Colonic mucosa (tissue), 4 donors: ENCODE measurements at regions of chr9 and their contacts with region 1.

Region 1: DNA sequence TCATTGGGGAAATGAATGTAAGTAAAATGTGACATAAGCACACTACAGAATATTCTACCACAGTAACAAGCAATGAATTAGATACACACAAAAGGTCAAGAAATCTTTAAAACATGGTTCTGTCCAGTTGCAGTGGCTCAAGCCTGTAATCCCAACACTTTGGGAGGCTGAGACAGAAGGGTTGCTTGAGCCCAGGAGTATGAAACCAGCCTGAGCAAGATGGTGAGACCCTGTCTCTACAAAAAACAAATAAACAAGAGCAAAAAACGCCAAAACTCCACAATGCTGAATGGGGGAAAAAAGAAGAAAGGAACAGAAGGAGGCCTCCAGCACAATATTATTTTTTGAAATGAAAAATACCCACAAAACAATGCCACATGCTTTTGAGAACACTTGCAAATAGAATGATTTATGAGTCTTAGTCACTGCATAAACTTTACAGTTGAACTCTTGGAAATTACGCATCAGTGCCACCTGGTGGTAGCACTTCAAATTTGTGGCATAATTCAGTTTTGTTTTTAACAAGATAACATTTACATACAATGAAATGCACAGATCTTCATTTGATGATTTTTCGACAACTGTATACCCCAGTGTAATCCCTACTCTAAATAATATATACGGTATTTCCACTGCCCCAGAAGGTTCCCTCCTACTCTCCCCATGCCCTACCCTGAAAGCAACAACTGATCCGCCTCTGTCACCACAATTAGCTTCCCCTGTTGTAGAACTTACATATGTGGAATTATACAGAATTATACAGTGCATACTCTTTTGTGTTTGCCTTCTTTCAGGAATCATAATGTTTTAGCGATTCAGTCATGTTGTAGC is 14.4 kb upstream of the SPINK4 start:
- DNase-seq: peak; percentile 88
- H3K4me3 ChIP-seq: no peak overlapping the region
- H3K27ac ChIP-seq: no peak overlapping the region
- H3K4me1 ChIP-seq: no peaks in the 10 kb centered on the region
- H3K27me3 ChIP-seq: no peaks in the 10 kb centered on the region
- CTCF ChIP-seq: peak; percentile 72

Region 2: DNA sequence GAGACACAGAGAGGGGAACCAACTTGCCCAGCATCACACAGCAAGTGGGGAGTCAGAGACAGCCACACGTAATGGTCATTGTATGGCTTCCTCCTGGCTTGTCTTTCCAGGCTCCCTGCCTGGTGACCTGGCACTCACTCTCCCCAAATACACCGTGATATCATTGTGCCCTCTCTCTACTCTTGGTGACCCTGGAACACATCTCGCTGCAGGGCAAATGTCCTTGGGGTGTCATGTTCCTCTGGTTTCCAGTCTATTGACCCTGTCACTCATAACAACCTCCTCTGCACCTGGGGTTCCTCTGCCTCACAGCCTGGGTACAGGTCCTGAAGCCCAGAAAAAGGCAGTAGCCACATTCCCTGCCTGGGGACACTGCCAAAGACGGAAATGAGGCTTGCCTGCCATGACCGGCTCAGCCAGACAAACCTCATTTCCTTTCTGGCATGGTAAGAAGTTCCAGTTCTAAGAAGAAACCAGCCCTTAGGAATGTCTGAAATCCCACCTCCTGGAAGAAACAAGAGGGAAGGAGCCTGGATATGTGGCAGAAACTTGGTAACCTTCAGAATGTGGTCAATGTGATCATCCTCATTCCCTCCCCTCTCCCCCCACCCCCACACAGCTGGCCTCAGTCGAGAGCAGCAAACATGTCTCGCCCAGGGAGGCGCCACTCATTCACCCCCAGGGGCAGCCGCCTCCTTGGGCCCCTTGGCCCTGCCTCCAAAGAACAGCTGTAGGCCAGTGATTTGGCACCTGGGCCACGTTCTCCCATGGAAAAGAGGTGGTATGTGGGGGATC is 118.5 kb before region 1 on chr9:
- intact Hi-C with region 1: no loop called
- DNase-seq: no peak
- H3K4me3 ChIP-seq: no peak overlapping the region
- H3K27ac ChIP-seq: no peak overlapping the region
- H3K4me1 ChIP-seq: no peaks in the 10 kb centered on the region
- H3K27me3 ChIP-seq: no peaks in the 10 kb centered on the region
- CTCF ChIP-seq: no peak

Region 3: DNA sequence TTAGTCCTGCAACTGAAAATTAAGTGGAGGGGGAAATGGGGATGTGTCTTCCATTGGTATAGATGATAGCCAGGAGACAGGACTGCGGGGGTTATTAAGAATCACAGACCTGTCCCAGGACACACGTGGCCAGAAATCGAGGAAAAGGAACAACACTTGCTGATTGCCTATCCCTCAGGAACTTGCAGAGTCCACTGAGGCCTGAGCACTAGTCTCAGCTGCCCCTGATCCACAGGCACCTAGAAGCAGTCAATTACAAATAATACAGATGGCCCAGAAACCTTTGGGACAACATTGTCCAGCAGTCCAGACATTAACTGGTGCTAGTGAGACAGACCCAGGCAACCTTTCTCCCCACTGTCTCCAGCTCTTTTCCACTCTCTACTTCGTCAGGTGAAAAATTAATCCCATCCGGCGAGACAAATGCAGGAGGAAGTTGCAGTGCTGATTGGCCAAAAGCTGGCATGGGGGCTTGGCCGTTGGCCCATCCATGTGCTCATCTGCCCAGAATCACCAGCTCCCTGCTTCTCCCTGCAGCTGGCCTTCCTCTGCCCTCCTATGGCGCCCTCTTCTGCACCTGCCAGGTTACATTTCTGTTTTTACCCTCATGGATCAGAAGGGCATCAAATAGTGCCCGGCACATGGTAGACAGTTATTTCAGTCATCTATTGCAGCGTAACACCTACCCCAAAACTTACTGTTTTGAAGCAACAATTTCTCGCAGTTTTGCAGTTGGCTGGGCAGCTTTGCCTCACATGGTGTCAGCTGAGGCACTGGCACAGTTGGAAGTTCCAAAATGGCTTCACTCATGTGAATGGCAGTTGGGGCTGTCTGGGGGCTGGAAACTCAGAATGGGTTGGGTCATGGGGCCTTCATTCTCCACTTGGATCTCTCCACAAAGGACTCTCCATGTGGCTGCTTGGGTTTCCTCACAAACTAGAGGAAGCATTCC is 54.8 kb before region 1 on chr9:
- intact Hi-C with region 1: loop called (anchors 5 kb)
- DNase-seq: peak; percentile 57
- H3K4me3 ChIP-seq: no peak overlapping the region
- H3K27ac ChIP-seq: no peak overlapping the region
- H3K4me1 ChIP-seq: no peaks in the 10 kb centered on the region
- H3K27me3 ChIP-seq: no peaks in the 10 kb centered on the region
- CTCF ChIP-seq: no peak